ENCODE measurements at regions of chr14 and their contacts with region 1.

Region 1: GRCh38 chr14:77067632-77068514 is 30.2 kb upstream of the CIPC start:
- DNase-seq: peak; percentile 45 to 73
- ATAC-seq: peak; percentile 49 to 79 (median 66)
- H3K4me3 ChIP-seq: no peak overlapping the region
- H3K4me3 Mint-ChIP-seq: no peak overlapping the region
- H3K27ac ChIP-seq: no peak overlapping the region
- H3K27ac Mint-ChIP-seq: no peak overlapping the region
- H3K4me1 ChIP-seq: no peaks in the 10 kb centered on the region
- H3K4me1 Mint-ChIP-seq: peaks cover 0 to 14% of the 10 kb centered on the region in 2 donors
- H3K27me3 ChIP-seq: peaks cover 2% of the 10 kb centered on the region
- H3K27me3 Mint-ChIP-seq: peaks cover 0 to 6% of the 10 kb centered on the region in 2 donors
- CTCF ChIP-seq: peak; percentile 72

Region 2: DNA sequence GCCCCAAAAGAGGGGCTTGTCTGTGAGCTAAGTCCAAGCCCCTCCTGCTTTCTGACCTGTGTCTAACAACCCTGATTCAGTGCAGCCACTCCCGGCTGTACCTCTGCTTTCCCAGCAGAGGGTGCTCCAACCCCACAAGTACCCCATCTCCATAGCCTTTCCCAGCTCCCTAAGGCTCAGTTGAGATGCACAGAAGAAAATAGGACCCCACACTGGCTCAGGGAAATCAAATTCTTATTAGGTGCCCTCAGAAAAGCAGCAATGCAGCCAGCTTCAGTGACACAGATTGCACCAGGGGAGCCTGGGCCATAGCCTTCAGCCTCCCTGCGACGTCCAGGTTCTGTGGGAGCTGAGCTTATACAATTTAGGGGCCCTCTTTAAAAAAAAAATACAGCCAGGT is 191.8 kb before region 1 on chr14:
- intact Hi-C with region 1: loop called (anchors 1 kb)
- DNase-seq: peak; percentile 30 to 73
- ATAC-seq: peak; percentile 46 to 86 (median 80)
- H3K4me3 ChIP-seq: no peak overlapping the region
- H3K4me3 Mint-ChIP-seq: no peak overlapping the region
- H3K27ac ChIP-seq: no peak overlapping the region
- H3K27ac Mint-ChIP-seq: no peak overlapping the region
- H3K4me1 ChIP-seq: no peaks in the 10 kb centered on the region
- H3K4me1 Mint-ChIP-seq: no peaks in the 10 kb centered on the region
- H3K27me3 ChIP-seq: no peaks in the 10 kb centered on the region
- H3K27me3 Mint-ChIP-seq: no peaks in the 10 kb centered on the region
- CTCF ChIP-seq: peak; percentile 86